Activated B cell treated with CpG ODN at 0.5 μM for 24 hours (primary cell): ENCODE measurements at regions of chr1 and their contacts with region 1.

Region 1: GRCh38 chr1:173420330-173420806 is 56.8 kb upstream of the PRDX6 start:
- DNase-seq: no peak
- ATAC-seq: peak; percentile 21
- H3K4me3 Mint-ChIP-seq: peak overlapping the region; percentile 60
- H3K27ac Mint-ChIP-seq: peak overlapping the region; percentile 95
- H3K4me1 Mint-ChIP-seq: peaks cover 63% of the 10 kb centered on the region
- H3K27me3 Mint-ChIP-seq: no peaks in the 10 kb centered on the region
- CTCF ChIP-seq: no peak

Region 2: GRCh38 chr1:173112129-173112528 is 308.2 kb before region 1 on chr1:
- CTCF ChIA-PET with region 1: no interaction called
- POLR2A ChIA-PET with region 1: no interaction called
- intact Hi-C with region 1: loop called (anchors 5 kb)
- DNase-seq: no peak
- ATAC-seq: peak; percentile 90
- H3K4me3 Mint-ChIP-seq: peak overlapping the region; percentile 8
- H3K27ac Mint-ChIP-seq: peak overlapping the region; percentile 46
- H3K4me1 Mint-ChIP-seq: peaks cover 39% of the 10 kb centered on the region
- H3K27me3 Mint-ChIP-seq: no peaks in the 10 kb centered on the region
- CTCF ChIP-seq: no peak

Region 3: GRCh38 chr1:173255214-173255813 is 165.1 kb before region 1 on chr1:
- CTCF ChIA-PET with region 1: interaction called, 5 read pairs
- POLR2A ChIA-PET with region 1: interaction called, 10 read pairs
- intact Hi-C with region 1: no loop called
- DNase-seq: no peak
- ATAC-seq: no peak
- H3K4me3 Mint-ChIP-seq: no peak overlapping the region
- H3K27ac Mint-ChIP-seq: no peak overlapping the region
- H3K4me1 Mint-ChIP-seq: peaks cover 15% of the 10 kb centered on the region
- H3K27me3 Mint-ChIP-seq: no peaks in the 10 kb centered on the region
- CTCF ChIP-seq: peak; percentile 74

Region 4: DNA sequence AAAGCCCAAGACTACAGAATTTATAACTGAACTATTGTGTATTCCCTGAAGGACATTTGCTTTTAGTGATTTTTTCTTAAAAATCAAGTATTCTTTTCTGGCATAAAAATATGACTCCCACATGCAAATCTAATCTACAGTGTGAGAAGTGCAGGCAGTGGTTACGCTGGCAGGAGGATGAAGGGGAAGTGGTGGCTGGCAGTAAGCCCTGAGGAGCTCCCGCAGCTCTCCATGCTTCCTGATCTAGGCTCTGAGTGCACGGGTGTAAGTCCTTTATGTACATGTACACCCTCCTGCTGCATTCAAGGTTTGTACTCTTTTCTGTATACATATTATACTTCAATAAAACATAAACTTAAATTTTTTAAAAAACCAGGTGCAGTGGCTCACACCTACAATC is 10.8 kb before region 1 on chr1:
- CTCF ChIA-PET with region 1: interaction called, 11 read pairs
- POLR2A ChIA-PET with region 1: interaction called, 108 read pairs
- intact Hi-C with region 1: loop called (anchors 1 kb)
- DNase-seq: no peak
- ATAC-seq: peak; percentile 25
- H3K4me3 Mint-ChIP-seq: peak overlapping the region; percentile 81
- H3K27ac Mint-ChIP-seq: peak overlapping the region; percentile 95
- H3K4me1 Mint-ChIP-seq: peaks cover 91% of the 10 kb centered on the region
- H3K27me3 Mint-ChIP-seq: no peaks in the 10 kb centered on the region
- CTCF ChIP-seq: no peak

Region 5: DNA sequence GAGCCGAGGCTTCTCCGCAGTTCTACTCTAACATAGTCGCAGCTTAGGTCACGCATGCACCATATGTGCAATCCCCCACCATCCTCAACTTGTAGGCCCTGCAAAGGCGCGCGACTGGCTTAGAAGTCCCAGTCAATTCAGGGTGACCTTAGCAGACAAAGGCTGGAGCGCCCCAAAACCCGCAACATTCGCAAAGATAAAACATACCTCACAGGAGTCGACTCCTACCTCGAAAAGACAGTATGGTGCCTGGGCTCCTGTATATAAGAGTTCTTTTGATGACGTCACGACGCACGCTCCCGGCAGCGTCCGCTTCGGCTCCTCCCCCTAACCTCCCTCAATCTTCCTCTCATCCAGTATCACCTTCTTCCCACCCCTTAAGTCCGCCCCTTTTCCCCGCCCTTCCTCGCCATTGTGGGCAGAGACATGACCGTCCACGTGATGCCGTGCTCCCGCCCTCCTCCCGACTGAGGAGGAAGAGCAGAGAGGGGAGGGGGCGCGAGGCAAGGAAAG is 447.4 kb after region 1 on chr1 and contains the start of gene GAS5:
- CTCF ChIA-PET with region 1: no interaction called
- POLR2A ChIA-PET with region 1: interaction called, 29 read pairs
- intact Hi-C with region 1: loop called (anchors 1 kb)
- DNase-seq: peak; percentile 95
- ATAC-seq: peak; percentile 80
- H3K4me3 Mint-ChIP-seq: peak within 1 kb of the TSS; percentile 97
- H3K27ac Mint-ChIP-seq: peak within 1 kb of the TSS; percentile 97
- H3K4me1 Mint-ChIP-seq: peaks cover 79% of the 10 kb centered on the region
- H3K27me3 Mint-ChIP-seq: no peaks in the 10 kb centered on the region
- CTCF ChIP-seq: no peak
- total RNA-seq, gene GAS5: 701 and 722 TPM in 2 replicates

Region 6: GRCh38 chr1:174726167-174726879 is 1306.0 kb after region 1 on chr1:
- CTCF ChIA-PET with region 1: no interaction called
- POLR2A ChIA-PET with region 1: no interaction called
- intact Hi-C with region 1: loop called (anchors 1 kb)
- DNase-seq: no peak
- ATAC-seq: no peak
- H3K4me3 Mint-ChIP-seq: no peak overlapping the region
- H3K27ac Mint-ChIP-seq: no peak overlapping the region
- H3K4me1 Mint-ChIP-seq: peaks cover 4% of the 10 kb centered on the region
- H3K27me3 Mint-ChIP-seq: no peaks in the 10 kb centered on the region
- CTCF ChIP-seq: no peak